Activated B cell treated with CpG ODN at 0.5 μM for 24 hours (primary cell): ENCODE measurements at regions of chr18 and their contacts with region 1.

Region 1: GRCh38 chr18:2571200-2572143 is at the starts of genes METTL4 and NDC80:
- DNase-seq: peak; percentile 82
- ATAC-seq: peak; percentile 93
- H3K4me3 Mint-ChIP-seq: peak within 1 kb of the TSS; percentile 100
- H3K27ac Mint-ChIP-seq: peak within 1 kb of the TSS; percentile 99
- H3K4me1 Mint-ChIP-seq: peaks cover 50% of the 10 kb centered on the region
- H3K27me3 Mint-ChIP-seq: no peaks in the 10 kb centered on the region
- CTCF ChIP-seq: no peak
- total RNA-seq, gene METTL4: 17.4 TPM in 2 replicates
- total RNA-seq, gene NDC80: 1.9 and 2.6 TPM in 2 replicates

Region 2: GRCh38 chr18:2529154-2529553 is 42.3 kb before region 1 on chr18:
- CTCF ChIA-PET with region 1: no interaction called
- POLR2A ChIA-PET with region 1: no interaction called
- intact Hi-C with region 1: no loop called
- DNase-seq: no peak
- ATAC-seq: no peak
- H3K4me3 Mint-ChIP-seq: no peak overlapping the region
- H3K27ac Mint-ChIP-seq: no peak overlapping the region
- H3K4me1 Mint-ChIP-seq: peaks cover 12% of the 10 kb centered on the region
- H3K27me3 Mint-ChIP-seq: no peaks in the 10 kb centered on the region
- CTCF ChIP-seq: no peak

Region 3: GRCh38 chr18:2606335-2606734 is 34.9 kb after region 1 on chr18:
- CTCF ChIA-PET with region 1: interaction called, 4 read pairs
- POLR2A ChIA-PET with region 1: interaction called, 4 read pairs
- intact Hi-C with region 1: loop called (anchors 1 kb)
- DNase-seq: no peak
- ATAC-seq: no peak
- H3K4me3 Mint-ChIP-seq: peak overlapping the region; percentile 24
- H3K27ac Mint-ChIP-seq: peak overlapping the region; percentile 83
- H3K4me1 Mint-ChIP-seq: peaks cover 31% of the 10 kb centered on the region
- H3K27me3 Mint-ChIP-seq: no peaks in the 10 kb centered on the region
- CTCF ChIP-seq: no peak

Region 4: DNA sequence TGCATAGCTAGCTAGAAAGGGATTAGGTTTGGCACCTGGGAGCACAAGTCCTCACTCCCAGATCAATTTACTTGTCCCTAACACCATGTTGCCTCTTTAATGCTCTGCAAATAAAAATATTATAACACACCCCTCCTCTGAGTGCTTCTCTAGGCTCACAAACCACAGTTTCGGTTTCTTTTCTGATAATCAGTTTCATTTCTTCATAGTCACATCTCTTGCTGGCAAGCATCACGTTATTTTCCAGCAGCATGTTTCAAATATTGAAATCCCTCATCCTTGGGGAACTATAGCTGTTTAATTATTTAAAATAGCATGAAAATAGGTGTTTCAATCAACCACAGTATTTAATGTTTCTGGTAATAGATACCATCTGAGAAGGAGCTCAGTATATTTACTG is 70.2 kb after region 1 on chr18:
- CTCF ChIA-PET with region 1: interaction called, 6 read pairs
- POLR2A ChIA-PET with region 1: interaction called, 54 read pairs
- intact Hi-C with region 1: loop called (anchors 1 kb)
- DNase-seq: no peak
- ATAC-seq: peak; percentile 59
- H3K4me3 Mint-ChIP-seq: peak overlapping the region; percentile 77
- H3K27ac Mint-ChIP-seq: no peak overlapping the region
- H3K4me1 Mint-ChIP-seq: peaks cover 54% of the 10 kb centered on the region
- H3K27me3 Mint-ChIP-seq: no peaks in the 10 kb centered on the region
- CTCF ChIP-seq: no peak

Region 5: DNA sequence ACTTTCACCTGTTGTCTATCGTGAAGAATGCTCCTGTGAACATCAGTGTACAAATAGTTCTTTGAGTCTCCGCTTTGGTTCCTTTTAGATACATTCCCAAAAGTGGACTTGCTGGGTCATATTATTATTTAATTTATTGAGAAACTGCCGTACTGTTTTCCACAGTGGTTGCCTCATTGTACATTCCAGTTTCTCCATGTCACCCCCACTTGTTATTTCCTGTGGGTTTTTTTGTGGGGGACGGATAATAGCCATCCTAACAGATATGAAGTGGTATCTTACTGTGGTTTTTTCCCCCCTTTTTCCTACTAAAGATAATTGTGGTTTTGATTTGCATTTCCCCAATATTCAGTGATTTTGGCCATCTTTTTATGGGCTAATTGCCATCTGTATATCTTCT is 137.8 kb after region 1 on chr18:
- CTCF ChIA-PET with region 1: no interaction called
- POLR2A ChIA-PET with region 1: no interaction called
- intact Hi-C with region 1: loop called (anchors 2 kb)
- DNase-seq: no peak
- ATAC-seq: no peak
- H3K4me3 Mint-ChIP-seq: no peak overlapping the region
- H3K27ac Mint-ChIP-seq: no peak overlapping the region
- H3K4me1 Mint-ChIP-seq: peaks cover 11% of the 10 kb centered on the region
- H3K27me3 Mint-ChIP-seq: no peaks in the 10 kb centered on the region
- CTCF ChIP-seq: no peak